T-cell (primary cell): ENCODE measurements at regions of chr10 and their contacts with region 1.

Region 1: DNA sequence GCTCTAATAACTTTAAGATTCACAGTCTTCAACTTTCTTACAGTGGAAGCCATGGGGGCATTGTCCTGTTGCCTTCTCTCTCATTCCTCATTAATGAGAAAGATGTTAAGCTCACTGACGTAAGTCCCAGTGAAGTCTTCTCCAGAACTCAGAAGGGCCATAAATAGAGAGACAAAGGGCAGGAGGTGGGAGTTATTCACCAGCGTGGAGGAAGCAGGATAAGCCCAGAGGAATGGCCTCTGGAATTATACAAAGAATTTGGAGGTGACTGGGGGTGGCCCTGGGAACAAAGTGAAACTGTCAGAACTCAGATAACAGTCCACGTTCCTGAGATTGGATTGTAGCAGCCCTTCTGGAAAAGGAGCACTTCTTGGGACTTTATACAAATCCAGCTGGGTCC is 52.4 kb downstream of the SORBS1 start:
- DNase-seq: no peak
- ATAC-seq: no peak
- H3K4me3 ChIP-seq: no peak overlapping the region
- H3K4me3 Mint-ChIP-seq: no peak overlapping the region
- H3K27ac ChIP-seq: no peak overlapping the region
- H3K27ac Mint-ChIP-seq: no peak overlapping the region
- H3K4me1 ChIP-seq: no peaks in the 10 kb centered on the region
- H3K4me1 Mint-ChIP-seq: no peaks in the 10 kb centered on the region
- H3K27me3 ChIP-seq: peaks cover 0 to 8% of the 10 kb centered on the region in 2 experiments
- H3K27me3 Mint-ChIP-seq: peaks cover 6 to 13% of the 10 kb centered on the region in 2 donors

Region 2: GRCh38 chr10:94524146-94524545 is 984.6 kb before region 1 on chr10:
- CTCF ChIA-PET with region 1: interaction called in 1 of 2 experiments, 10 read pairs
- POLR2A ChIA-PET with region 1: no interaction called
- DNase-seq: no peak
- ATAC-seq: no peak
- H3K4me3 ChIP-seq: no peak overlapping the region
- H3K4me3 Mint-ChIP-seq: no peak overlapping the region
- H3K27ac ChIP-seq: no peak overlapping the region
- H3K27ac Mint-ChIP-seq: no peak overlapping the region
- H3K4me1 ChIP-seq: no peaks in the 10 kb centered on the region
- H3K4me1 Mint-ChIP-seq: no peaks in the 10 kb centered on the region
- H3K27me3 ChIP-seq: peaks cover 0 to 6% of the 10 kb centered on the region in 2 experiments
- H3K27me3 Mint-ChIP-seq: peaks cover 10 to 11% of the 10 kb centered on the region in 2 donors

Region 3: DNA sequence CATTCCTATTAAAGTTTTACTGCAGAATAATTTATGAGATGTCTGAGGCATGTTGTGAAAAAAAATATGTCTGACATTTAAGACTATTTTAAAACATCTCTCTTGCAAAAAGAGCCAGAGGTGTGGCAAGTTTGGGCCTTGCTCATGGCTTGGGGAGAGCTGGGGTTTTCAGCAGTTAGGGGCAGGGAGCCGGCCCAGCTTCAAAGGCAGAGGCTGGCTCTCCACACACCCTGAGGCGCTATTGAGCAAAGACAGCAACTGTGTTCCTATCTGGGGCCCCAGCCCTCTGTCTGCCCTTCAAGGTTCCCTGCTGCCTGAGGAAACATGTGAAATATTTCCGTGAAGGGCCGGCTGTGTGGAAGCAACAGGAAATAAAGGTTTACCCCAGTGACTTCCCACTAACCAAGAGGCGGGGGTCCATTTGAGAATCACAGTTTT is 41.5 kb before region 1 on chr10:
- CTCF ChIA-PET with region 1: no interaction called
- POLR2A ChIA-PET with region 1: no interaction called
- DNase-seq: no peak
- ATAC-seq: no peak
- H3K4me3 ChIP-seq: no peak overlapping the region
- H3K4me3 Mint-ChIP-seq: no peak overlapping the region
- H3K27ac ChIP-seq: no peak overlapping the region
- H3K27ac Mint-ChIP-seq: no peak overlapping the region
- H3K4me1 ChIP-seq: peaks cover 0 to 6% of the 10 kb centered on the region in 2 experiments
- H3K4me1 Mint-ChIP-seq: peaks cover 0 to 2% (median 0%) of the 10 kb centered on the region in 3 donors
- H3K27me3 ChIP-seq: peaks cover 0 to 2% of the 10 kb centered on the region in 2 experiments
- H3K27me3 Mint-ChIP-seq: peaks cover 4 to 20% of the 10 kb centered on the region in 2 donors

Region 4: DNA sequence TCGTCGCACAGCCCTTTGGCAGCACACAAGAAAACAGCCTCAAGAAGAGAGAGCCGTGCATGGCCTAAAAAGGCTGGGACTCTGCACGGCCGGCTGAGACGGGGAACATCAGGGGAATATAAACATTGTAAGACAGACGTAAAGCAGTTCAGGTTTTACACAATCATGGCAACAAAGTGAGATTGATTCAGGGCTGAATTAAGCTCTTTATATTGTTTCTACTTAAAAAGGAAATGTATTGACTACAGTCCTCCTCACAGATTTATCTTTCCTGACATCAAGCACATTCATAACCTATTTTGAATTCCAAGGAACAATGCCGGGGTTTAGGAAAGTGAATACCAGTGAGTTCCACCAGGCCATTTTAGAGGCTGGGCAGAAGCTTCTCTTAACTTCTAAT is 27.3 kb after region 1 on chr10:
- CTCF ChIA-PET with region 1: no interaction called
- POLR2A ChIA-PET with region 1: no interaction called
- DNase-seq: no peak
- ATAC-seq: no peak
- H3K4me3 ChIP-seq: no peak overlapping the region
- H3K4me3 Mint-ChIP-seq: no peak overlapping the region
- H3K27ac ChIP-seq: no peak overlapping the region
- H3K27ac Mint-ChIP-seq: no peak overlapping the region
- H3K4me1 ChIP-seq: no peaks in the 10 kb centered on the region
- H3K4me1 Mint-ChIP-seq: no peaks in the 10 kb centered on the region
- H3K27me3 ChIP-seq: peaks cover 0 to under 1% of the 10 kb centered on the region in 2 experiments
- H3K27me3 Mint-ChIP-seq: no peaks in the 10 kb centered on the region